ENCODE measurements at regions of chr11 and their contacts with region 1.

Region 1: DNA sequence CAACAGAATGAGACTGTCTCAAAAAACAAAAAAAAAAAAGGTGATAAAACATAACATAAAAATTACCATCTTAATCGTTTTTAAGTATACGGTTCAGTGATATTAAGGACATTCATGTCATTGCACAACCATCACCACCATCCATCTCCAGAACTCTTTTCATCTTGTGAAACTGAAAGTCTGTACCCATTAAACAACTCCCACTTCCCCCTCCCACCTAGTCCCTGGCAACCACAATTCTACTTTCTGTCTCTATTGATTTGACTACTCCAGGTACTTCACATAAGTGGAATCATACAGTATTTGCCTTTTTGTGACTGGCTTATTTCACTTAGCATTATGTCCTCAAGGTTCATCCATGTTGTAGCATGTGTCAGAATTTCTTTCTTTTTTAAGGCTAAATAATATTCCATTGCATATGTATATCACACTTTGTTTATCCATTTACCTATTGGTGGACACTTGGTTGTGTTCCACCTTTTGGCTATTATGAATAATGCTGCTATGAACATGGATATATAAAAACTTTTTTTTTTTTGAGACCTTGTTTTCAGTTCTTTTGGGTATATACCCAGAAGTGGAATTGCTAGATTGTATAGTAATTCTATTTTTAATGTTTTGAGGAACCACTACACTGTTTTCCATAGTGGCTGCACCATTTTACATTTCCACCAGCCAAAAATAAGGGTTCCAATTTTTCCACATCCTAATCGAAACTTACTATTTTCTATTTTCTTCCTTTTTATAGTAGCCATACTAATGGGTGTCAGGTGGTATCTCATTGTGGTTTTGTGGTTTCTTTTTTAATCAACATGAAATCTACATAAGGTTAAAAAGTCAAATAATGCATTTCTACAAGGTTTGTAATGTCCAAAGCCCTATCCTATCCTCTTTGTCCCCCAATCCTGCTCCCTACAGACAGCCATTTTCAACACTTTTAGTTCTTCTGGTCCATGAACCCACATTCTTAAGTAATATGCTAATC is 23.4 kb upstream of the PIK3C2A start:
- DNase-seq: no peak
- ATAC-seq: no peak
- H3K4me3 ChIP-seq: no peak overlapping the region
- H3K27ac ChIP-seq: no peak overlapping the region
- H3K4me1 ChIP-seq: peaks cover 0 to 2% of the 10 kb centered on the region in 2 donors
- H3K27me3 ChIP-seq: no peaks in the 10 kb centered on the region
- CTCF ChIP-seq: no peak
- POLR2A ChIP-seq: no peak

Region 2: DNA sequence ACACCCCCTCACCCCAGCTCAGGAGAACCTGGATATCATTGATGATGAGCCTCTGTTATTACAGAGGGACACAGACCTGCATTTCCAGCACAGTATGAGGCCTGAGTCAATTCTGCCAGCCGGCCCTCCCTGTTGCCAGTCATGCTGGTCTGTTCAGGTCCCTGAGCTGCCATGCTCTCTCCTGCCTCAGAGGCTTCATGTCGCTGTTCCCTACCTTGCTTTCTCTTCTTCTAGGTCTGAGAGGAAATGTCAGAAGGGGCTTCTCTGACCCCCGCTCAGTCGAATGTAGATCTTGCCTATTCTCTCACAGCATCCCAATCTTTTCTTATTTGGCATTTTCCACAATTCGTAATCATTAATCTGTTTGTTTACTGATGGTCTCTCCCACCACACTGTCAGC is 267.3 kb after region 1 on chr11:
- in situ Hi-C with region 1: loop called in 3 of 4 experiments (anchors 10 to 25 kb)
- intact Hi-C with region 1: no loop called
- DNase-seq: no peak
- ATAC-seq: peak in 1 of 2 donors; percentile 39
- H3K4me3 ChIP-seq: no peak overlapping the region
- H3K27ac ChIP-seq: no peak overlapping the region
- H3K4me1 ChIP-seq: no peaks in the 10 kb centered on the region
- H3K27me3 ChIP-seq: no peaks in the 10 kb centered on the region
- CTCF ChIP-seq: peak in 1 of 5 experiments; percentile 7
- POLR2A ChIP-seq: no peak

Region 3: DNA sequence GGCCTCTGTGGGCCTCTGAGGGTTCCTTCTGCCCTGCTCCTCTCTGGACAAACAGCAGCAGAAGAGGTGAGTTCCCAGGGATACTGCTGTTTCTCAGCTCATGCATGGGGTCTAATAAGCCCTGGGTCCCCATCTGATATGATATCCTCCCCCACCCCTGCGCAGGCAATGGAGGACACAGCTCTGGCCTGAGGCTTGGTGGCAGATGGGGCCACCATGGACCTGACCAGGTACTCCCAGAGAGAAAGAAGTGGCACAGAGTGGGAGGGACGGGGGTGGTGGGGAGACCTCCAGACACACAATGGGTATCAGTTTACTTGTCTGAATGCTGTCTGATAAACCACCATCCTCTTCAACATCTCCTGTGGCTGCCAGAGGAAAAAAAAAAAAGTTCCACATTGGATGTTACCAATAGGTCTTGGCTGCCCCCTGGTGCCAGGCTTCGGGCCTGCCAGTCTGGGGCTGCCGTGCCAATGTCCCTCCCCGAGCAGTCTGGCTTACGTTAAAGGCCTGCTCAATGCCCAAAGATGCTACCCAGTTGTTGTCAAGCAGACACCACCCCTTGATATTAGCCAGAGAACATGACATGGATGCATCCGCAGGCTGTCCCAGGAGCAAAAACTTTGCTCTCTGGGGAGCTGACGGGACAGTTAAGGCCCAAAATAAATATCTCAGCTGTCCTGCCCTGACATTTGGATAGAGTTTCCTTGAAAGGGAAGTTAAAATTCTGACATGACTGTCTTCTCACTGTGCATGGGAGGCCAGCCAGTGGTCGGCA is 273.4 kb after region 1 on chr11:
- in situ Hi-C with region 1: loop called in 3 of 4 experiments (anchors 10 to 25 kb)
- intact Hi-C with region 1: no loop called
- DNase-seq: peak; percentile 59 to 82
- ATAC-seq: peak; percentile 67 to 90
- H3K4me3 ChIP-seq: no peak overlapping the region
- H3K27ac ChIP-seq: peak overlapping the region; percentile 12 to 39 (median 32)
- H3K4me1 ChIP-seq: peaks cover 20 to 24% of the 10 kb centered on the region in 2 donors
- H3K27me3 ChIP-seq: no peaks in the 10 kb centered on the region
- CTCF ChIP-seq: peak; percentile 88 to 98 (median 90)
- POLR2A ChIP-seq: no peak

Region 4: GRCh38 chr11:17528181-17528691 is 297.1 kb after region 1 on chr11:
- in situ Hi-C with region 1: loop called in 3 of 4 experiments (anchors 10 to 25 kb)
- intact Hi-C with region 1: no loop called
- DNase-seq: no peak
- ATAC-seq: peak in 1 of 2 donors; percentile 79
- H3K4me3 ChIP-seq: no peak overlapping the region
- H3K27ac ChIP-seq: no peak overlapping the region
- H3K4me1 ChIP-seq: no peaks in the 10 kb centered on the region
- H3K27me3 ChIP-seq: peaks cover 0 to 2% (median 0%) of the 10 kb centered on the region in 3 donors
- CTCF ChIP-seq: peak in 4 of 5 experiments; percentile 56 to 72 (median 68)
- POLR2A ChIP-seq: no peak